HepG2 (cell line): ENCODE measurements at regions of chr19 and their contacts with region 1.

Region 1: DNA sequence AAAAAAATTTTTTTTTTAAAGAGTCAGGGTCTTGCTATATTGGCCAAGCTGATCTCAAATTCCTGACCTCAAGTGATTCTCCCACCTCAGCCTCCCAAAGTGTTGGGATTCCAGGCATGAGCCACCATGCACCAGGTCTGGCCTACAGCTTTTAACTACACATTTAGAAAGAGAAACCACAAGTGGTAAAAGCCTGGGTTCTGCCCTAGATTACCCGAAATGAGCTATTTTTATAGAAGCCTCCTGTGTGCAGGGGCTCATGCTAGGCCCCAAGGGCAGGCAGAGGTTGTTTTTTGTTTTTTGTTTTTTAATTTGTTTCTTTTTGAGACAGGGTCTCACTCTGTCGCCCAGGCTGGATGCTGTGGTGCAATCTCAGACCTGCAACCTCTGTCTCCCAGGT is 14.0 kb upstream of the MYADM start:
- DNase-seq: no peak
- ATAC-seq: no peak
- H3K4me3 ChIP-seq: no peak overlapping the region
- H3K27ac ChIP-seq: no peak overlapping the region
- H3K4me1 ChIP-seq: peaks cover 22% of the 10 kb centered on the region
- H3K27me3 ChIP-seq: peaks cover 0 to 3% of the 10 kb centered on the region in 2 experiments; a peak in 2 of 5 replicates
- CTCF ChIP-seq: no peak
- EP300 ChIP-seq: no peak
- POLR2A ChIP-seq: no peak
- RAD21 ChIP-seq: no peak

Region 2: DNA sequence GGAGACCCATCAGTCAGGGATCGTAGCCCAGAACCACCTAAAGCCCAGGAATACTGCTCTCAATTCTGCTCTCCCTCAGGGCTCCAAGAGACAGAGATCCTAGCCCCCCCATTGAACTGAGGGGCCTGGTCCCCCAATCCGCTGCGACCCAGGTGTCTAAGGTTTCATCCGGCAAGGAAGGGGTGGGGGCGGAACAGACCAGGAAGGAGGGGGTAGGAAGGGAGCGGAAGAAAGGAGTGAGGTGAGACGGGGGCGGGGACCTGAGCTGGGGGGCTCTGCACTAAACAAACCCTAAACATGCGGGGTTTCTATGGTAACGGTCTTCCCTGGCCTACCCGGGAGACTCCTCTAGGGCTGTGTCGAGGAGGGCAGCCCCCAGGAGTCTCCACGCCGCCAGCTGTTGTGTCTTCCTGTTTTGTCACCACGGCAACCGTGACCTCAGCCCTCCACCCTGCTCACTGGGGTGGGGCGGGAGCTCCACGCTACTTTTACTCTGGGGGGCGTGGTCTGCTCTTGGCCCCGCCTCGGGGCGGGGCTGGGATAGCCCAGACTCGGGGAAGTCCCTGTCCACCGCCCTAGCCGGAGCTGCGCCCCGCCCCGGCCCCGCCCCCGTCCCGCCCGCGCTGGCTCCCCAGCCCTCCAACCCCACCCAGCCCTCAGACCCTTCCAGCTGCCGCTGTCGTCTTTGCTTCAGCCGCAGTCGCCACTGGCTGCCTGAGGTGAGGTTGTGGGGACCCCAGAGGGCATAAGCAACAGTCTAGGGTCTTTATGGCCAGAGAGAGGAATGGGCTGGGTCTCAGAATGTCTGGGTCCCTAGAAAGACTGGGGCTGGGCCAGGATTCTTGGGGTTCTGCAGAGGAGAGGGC is 13.8 kb after region 1 on chr19 and contains the start of gene MYADM:
- CTCF ChIA-PET with region 1: no interaction called
- POLR2A ChIA-PET with region 1: interaction called, 21 read pairs
- in situ Hi-C with region 1: no loop called
- intact Hi-C with region 1: loop called (anchors 1 kb)
- DNase-seq: peak; percentile 98
- ATAC-seq: peak; percentile 33
- H3K4me3 ChIP-seq: peak within 1 kb of the TSS; percentile 79 to 99 (median 99)
- H3K27ac ChIP-seq: peak within 1 kb of the TSS; percentile 100
- H3K4me1 ChIP-seq: peaks cover 32% of the 10 kb centered on the region
- H3K27me3 ChIP-seq: no peaks in the 10 kb centered on the region; a peak in 1 of 5 replicates
- CTCF ChIP-seq: no peak; the same call in 1 of the 2 replicates
- EP300 ChIP-seq: peak; percentile 73 to 90
- POLR2A ChIP-seq: peak; percentile 83 to 89
- RAD21 ChIP-seq: no peak; the same call in 1 of the 2 replicates
- total RNA-seq, gene MYADM: 12.4 and 19.9 TPM in 2 replicates